ENCODE measurements at regions of chr5 and their contacts with region 1.

Region 1: DNA sequence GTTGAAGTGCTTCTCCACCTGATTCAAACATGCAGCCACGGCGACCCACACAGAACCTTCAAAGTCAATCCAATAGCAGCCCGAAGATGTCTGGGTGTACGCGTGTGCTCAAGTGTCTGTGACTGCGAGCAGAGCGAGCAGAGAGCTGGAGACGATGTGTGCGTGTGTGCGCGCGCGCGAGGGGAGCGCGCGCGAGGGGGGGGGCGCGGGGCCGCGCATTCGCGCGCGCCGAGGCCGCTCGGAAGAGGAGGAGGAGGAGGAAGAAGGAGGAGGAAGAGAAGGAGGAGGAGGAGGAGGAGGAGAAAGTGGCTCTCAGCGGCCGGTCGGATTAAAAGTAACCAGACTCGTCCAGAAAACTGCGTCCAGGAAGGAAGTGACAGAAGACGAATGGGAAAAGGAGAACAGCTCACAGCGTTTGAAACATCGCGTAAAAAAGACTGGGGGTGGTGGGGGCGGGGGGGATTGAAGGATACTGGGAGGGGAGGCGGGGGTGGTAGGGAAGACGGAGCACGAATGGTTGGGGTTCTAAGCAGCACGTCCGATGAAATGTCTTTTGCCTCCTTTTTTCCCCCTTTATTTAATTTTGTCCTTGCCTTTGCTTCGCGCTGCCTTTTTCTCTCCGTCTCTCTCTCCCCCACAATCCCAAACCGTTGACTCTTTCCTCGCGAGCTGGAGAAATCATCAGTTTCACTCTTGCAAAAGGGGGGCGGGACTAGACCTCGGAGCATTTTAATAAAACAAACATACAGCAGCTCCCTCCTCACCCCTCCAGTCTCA is at the start of gene MEF2C:
- DNase-seq: no peak
- ATAC-seq: peak; percentile 45
- H3K4me3 ChIP-seq: peak within 1 kb of the TSS; percentile 85
- H3K27ac ChIP-seq: peak within 1 kb of the TSS; percentile 98
- H3K4me1 ChIP-seq: peaks cover 3% of the 10 kb centered on the region
- H3K27me3 ChIP-seq: no peaks in the 10 kb centered on the region
- CTCF ChIP-seq: no peak
- EP300 ChIP-seq: no peak
- POLR2A ChIP-seq: peak; percentile 94
- RAD21 ChIP-seq: no peak
- polyA plus RNA-seq, gene MEF2C: 143 to 147 TPM

Region 2: GRCh38 chr5:88833371-88834130 is 49.7 kb before region 1 on chr5:
- CTCF ChIA-PET with region 1: interaction called, 3 read pairs
- POLR2A ChIA-PET with region 1: interaction called, 14 read pairs
- RAD21 ChIA-PET with region 1: interaction called, 17 read pairs
- SMC1A ChIA-PET with region 1: interaction called, 182 read pairs
- in situ Hi-C with region 1: no loop called
- intact Hi-C with region 1: no loop called
- DNase-seq: no peak
- ATAC-seq: peak; percentile 65
- H3K4me3 ChIP-seq: peak overlapping the region; percentile 39; the same call in 1 of the 2 replicates
- H3K27ac ChIP-seq: peak overlapping the region; percentile 80
- H3K4me1 ChIP-seq: peaks cover 36% of the 10 kb centered on the region
- H3K27me3 ChIP-seq: no peaks in the 10 kb centered on the region
- CTCF ChIP-seq: no peak
- EP300 ChIP-seq: peak in 1 of 2 experiments; percentile 39; a peak in 1 of 4 replicates
- POLR2A ChIP-seq: no peak
- RAD21 ChIP-seq: no peak

Region 3: DNA sequence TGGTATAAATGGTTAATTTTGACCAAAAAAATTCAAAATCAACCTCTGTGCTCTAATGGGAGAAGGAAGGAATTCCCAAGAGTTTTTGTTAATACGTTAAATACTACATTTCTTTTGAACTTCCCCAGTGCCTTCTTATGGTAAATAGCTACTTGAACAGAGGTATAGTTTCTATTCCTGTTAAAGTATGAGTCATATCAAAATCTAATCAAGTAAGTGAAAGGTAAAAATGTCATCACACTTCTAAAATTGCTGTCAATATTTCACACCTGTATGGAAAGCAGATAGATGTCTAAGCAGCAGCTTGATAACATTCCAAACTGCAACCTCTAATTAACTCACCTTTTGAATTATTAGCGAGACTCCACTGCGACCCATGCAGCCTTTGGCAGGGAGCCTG is 213.9 kb after region 1 on chr5:
- CTCF ChIA-PET with region 1: no interaction called
- POLR2A ChIA-PET with region 1: interaction called, 3 read pairs
- RAD21 ChIA-PET with region 1: interaction called, 15 read pairs
- SMC1A ChIA-PET with region 1: interaction called, 8 read pairs
- in situ Hi-C with region 1: no loop called
- intact Hi-C with region 1: no loop called
- DNase-seq: peak; percentile 52
- ATAC-seq: peak; percentile 88
- H3K4me3 ChIP-seq: peak overlapping the region; percentile 26; the same call in 1 of the 2 replicates
- H3K27ac ChIP-seq: peak overlapping the region; percentile 52
- H3K4me1 ChIP-seq: peaks cover 12% of the 10 kb centered on the region
- H3K27me3 ChIP-seq: no peaks in the 10 kb centered on the region
- CTCF ChIP-seq: no peak
- EP300 ChIP-seq: peak; percentile 87 to 95
- POLR2A ChIP-seq: no peak
- RAD21 ChIP-seq: no peak

Region 4: GRCh38 chr5:89308606-89309040 is 425.4 kb after region 1 on chr5:
- CTCF ChIA-PET with region 1: no interaction called
- POLR2A ChIA-PET with region 1: no interaction called
- RAD21 ChIA-PET with region 1: interaction called, 3 read pairs
- SMC1A ChIA-PET with region 1: interaction called, 6 read pairs
- in situ Hi-C with region 1: loop called (anchors 10 kb)
- intact Hi-C with region 1: loop called (anchors 2 kb)
- DNase-seq: peak; percentile 92
- ATAC-seq: peak; percentile 89
- H3K4me3 ChIP-seq: no peak overlapping the region
- H3K27ac ChIP-seq: peak overlapping the region; percentile 96
- H3K4me1 ChIP-seq: peaks cover 44% of the 10 kb centered on the region
- H3K27me3 ChIP-seq: no peaks in the 10 kb centered on the region
- CTCF ChIP-seq: no peak
- EP300 ChIP-seq: peak; percentile 85 to 95
- POLR2A ChIP-seq: peak; percentile 43; the same call in 1 of the 2 replicates
- RAD21 ChIP-seq: peak; percentile 33; the same call in 1 of the 2 replicates

Region 5: DNA sequence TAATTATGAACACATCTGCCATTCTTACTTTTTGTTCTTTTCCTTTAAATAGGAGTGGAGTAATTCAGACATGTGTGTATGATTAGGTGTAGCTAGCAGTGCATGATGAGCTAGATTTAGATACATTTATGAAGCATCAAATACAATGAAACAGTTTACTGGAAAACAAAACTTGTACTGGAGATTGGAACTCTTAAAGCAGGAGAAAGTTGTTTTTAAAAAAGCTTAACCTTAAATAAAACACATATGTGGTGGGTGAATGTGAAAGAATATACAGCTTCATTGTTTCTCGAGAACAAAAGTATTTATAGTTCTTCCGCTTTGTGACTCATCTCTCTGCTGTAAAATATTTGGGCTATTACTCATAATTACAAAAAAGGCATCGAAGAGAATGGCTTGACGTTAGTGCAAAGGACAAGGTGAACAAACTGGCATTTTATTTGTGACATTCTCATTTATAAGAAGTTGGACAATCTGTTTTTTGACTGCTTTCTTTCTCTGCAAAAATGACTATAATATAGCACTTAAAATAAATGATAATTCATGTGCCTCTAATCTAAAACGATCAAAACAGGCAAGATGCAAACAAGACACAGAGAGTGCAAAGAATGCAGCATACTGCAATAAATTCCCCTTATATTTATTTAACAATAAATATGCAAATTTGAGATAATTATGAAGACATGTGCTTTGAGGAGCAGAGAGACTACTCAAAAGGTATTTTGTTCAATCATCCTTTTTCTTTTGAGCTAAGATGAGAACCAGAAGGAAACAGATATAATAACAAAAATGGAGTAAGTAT is 1047.5 kb after region 1 on chr5:
- CTCF ChIA-PET with region 1: no interaction called
- POLR2A ChIA-PET with region 1: no interaction called
- RAD21 ChIA-PET with region 1: no interaction called
- SMC1A ChIA-PET with region 1: no interaction called
- in situ Hi-C with region 1: no loop called
- intact Hi-C with region 1: loop called (anchors 10 kb)
- DNase-seq: peak; percentile 59
- ATAC-seq: peak; percentile 91
- H3K4me3 ChIP-seq: peak overlapping the region; percentile 4; the same call in 1 of the 2 replicates
- H3K27ac ChIP-seq: peak overlapping the region; percentile 70
- H3K4me1 ChIP-seq: peaks cover 12% of the 10 kb centered on the region; the same call in 1 of the 2 replicates
- H3K27me3 ChIP-seq: no peaks in the 10 kb centered on the region
- CTCF ChIP-seq: no peak
- EP300 ChIP-seq: peak; percentile 67 to 71; a peak in 2 of 4 replicates
- POLR2A ChIP-seq: no peak
- RAD21 ChIP-seq: peak; percentile 17; the same call in 1 of the 2 replicates